Activated naive CD4-positive, alpha-beta T cell treated with anti-CD3 and anti-CD28 coated beads for 36 hours (primary cell): ENCODE measurements at regions of chr5 and their contacts with region 1.

Region 1: GRCh38 chr5:41856644-41857491 is 13.4 kb downstream of the OXCT1 start:
- DNase-seq: peak; percentile 69
- H3K4me3 Mint-ChIP-seq: no peak overlapping the region
- H3K27ac Mint-ChIP-seq: no peak overlapping the region
- H3K4me1 Mint-ChIP-seq: peaks cover 26% of the 10 kb centered on the region
- H3K27me3 Mint-ChIP-seq: no peaks in the 10 kb centered on the region

Region 2: GRCh38 chr5:41748631-41749030 is 108.2 kb before region 1 on chr5:
- CTCF ChIA-PET with region 1: no interaction called
- intact Hi-C with region 1: no loop called
- DNase-seq: peak; percentile 63
- H3K4me3 Mint-ChIP-seq: no peak overlapping the region
- H3K27ac Mint-ChIP-seq: no peak overlapping the region
- H3K4me1 Mint-ChIP-seq: peaks cover 34% of the 10 kb centered on the region
- H3K27me3 Mint-ChIP-seq: no peaks in the 10 kb centered on the region

Region 3: DNA sequence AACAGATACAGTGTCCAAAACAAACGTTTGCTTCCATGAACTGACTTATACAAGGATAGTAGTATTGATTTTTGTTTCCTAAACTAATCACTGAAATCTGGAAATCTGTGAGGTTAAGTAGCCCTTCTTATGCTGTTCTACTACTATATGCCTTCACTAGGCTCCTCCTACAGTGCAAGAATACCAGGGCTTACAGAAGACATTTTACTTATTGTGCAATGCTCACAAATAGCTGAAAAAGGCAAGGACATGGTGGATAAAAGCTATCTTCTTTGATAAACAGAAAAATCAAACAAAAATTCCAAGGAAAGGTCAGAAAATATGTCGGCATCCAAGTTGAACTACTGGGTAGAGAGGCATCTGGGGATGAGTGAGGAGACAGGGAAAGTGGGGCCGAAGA is 48.6 kb before region 1 on chr5:
- CTCF ChIA-PET with region 1: no interaction called
- intact Hi-C with region 1: no loop called
- DNase-seq: no peak
- H3K4me3 Mint-ChIP-seq: no peak overlapping the region
- H3K27ac Mint-ChIP-seq: no peak overlapping the region
- H3K4me1 Mint-ChIP-seq: peaks cover 25% of the 10 kb centered on the region
- H3K27me3 Mint-ChIP-seq: no peaks in the 10 kb centered on the region

Region 4: DNA sequence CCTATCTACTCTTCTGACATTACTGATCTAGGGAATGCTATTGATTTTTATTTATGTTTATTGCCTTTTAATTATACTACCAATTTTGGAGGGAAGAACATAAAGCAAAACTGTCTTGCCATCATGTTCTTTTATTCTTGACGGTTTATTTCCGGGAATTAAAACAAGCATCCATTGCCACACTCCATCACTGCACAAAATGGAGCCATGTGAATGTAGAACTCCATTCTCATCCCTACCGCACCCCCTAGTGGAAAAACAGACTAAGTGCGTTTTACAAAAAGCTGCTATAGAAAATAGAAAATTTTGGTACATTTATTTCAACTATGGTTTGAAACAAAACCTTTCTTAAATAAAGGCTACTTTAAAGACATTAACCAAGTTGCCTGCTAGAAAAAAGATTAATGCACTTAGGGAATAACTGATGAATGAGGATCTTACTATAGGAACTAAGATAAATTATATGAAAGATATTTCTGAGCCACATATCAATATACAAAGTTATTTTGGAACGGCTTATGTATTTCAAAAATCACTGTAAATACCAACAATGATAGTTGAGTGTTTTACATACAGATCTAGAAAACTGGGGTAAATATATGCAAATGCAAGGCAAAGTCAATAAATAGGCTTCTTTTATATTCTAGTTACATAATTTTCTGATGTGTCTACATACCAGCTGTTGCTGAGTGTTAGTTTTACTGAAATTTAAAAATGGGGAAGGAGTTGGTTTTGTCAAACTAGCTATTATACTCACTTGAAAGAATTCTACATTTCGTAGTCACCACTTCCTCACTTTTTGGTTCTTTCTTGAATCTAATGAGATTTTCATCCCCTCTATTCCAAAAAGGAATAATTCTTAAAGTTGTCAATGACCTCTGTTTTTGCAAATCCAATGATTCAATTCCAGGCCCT is 13.2 kb before region 1 on chr5:
- CTCF ChIA-PET with region 1: interaction called, 27 read pairs
- intact Hi-C with region 1: no loop called
- DNase-seq: peak; percentile 36
- H3K4me3 Mint-ChIP-seq: no peak overlapping the region
- H3K27ac Mint-ChIP-seq: no peak overlapping the region
- H3K4me1 Mint-ChIP-seq: peaks cover 13% of the 10 kb centered on the region
- H3K27me3 Mint-ChIP-seq: no peaks in the 10 kb centered on the region

Region 5: DNA sequence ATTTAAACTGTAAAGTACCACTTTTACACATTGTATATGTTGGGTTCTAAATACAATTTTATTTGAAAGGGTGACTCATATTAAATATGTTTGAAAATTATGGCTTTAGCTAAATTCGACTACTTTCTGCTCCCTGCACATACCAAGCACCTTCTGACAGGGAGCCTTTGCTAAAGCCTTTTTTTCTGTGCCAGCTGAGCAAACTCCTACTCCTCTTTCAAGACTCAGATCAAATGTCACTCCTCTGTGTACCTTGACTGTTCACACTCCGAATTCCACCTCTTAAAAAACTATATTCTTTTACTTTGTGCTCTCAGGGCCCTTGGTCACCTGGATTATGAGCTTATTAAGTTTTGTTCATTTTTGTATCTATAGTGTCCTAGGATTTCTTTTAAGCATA is 19.8 kb after region 1 on chr5:
- CTCF ChIA-PET with region 1: interaction called, 11 read pairs
- intact Hi-C with region 1: no loop called
- DNase-seq: no peak
- H3K4me3 Mint-ChIP-seq: no peak overlapping the region
- H3K27ac Mint-ChIP-seq: no peak overlapping the region
- H3K4me1 Mint-ChIP-seq: peaks cover 17% of the 10 kb centered on the region
- H3K27me3 Mint-ChIP-seq: peaks cover 8% of the 10 kb centered on the region

Region 6: GRCh38 chr5:41924872-41925554 is 68.1 kb after region 1 on chr5 and contains the start of gene FBXO4:
- CTCF ChIA-PET with region 1: interaction called, 4 read pairs
- intact Hi-C with region 1: loop called (anchors 1 kb)
- DNase-seq: peak; percentile 89
- H3K4me3 Mint-ChIP-seq: peak within 1 kb of the TSS; percentile 85
- H3K27ac Mint-ChIP-seq: peak within 1 kb of the TSS; percentile 94
- H3K4me1 Mint-ChIP-seq: peaks cover 18% of the 10 kb centered on the region
- H3K27me3 Mint-ChIP-seq: no peaks in the 10 kb centered on the region
- total RNA-seq, gene FBXO4: 16.1 to 19.1 TPM

Region 7: DNA sequence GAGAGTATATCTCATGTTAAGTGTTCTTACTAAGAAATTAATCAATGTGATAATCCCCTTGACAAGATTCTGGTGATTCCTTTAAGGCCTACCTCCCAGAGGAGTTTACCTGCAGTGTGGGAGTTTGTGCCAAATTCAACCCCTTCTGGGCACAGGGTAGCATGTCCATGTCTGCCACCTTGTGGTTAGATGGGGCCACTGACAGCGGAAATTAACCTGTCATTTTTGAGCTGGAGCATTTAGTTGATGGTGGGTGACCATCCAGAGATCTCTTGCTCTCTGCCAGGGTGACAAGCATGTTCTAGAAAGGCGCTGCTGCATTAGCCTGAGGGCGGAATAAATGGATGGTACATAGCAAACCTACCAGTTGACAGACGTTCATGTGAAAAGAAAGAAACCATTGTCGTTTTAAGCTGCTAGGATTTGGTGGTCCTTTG is 200.4 kb after region 1 on chr5:
- CTCF ChIA-PET with region 1: interaction called, 68 read pairs
- intact Hi-C with region 1: loop called (anchors 1 kb)
- DNase-seq: peak; percentile 69
- H3K4me3 Mint-ChIP-seq: no peak overlapping the region
- H3K27ac Mint-ChIP-seq: no peak overlapping the region
- H3K4me1 Mint-ChIP-seq: no peaks in the 10 kb centered on the region
- H3K27me3 Mint-ChIP-seq: no peaks in the 10 kb centered on the region

Region 8: DNA sequence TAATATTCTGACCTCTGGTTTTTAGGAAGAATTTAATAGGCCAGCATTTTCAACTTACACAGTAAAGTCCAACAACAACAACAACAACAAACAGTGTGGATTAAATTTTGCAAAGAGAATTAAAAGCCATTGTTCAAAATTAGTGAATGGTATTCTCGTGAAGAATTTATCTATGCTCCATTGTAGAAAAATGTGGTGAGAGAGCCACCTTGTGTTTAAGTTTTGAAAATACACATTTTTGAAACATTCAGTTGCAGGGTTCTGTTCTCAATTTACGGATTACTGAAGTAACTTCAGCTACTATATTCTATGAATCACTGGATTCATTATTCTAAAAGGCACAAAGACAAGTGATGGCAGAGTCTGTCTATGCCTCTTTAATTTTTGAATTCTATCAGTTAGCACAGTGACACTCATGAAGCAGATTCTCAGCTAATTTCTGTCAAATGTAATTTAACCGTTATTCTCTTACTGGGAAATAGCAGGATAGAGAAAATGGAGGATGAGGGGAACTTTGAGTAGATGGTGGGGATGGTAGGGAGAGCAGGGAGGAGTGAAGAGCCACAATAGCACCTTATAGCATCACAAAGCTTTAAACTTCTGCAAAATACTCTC is 910.7 kb after region 1 on chr5:
- CTCF ChIA-PET with region 1: no interaction called
- intact Hi-C with region 1: loop called (anchors 5 kb)
- DNase-seq: no peak
- H3K4me3 Mint-ChIP-seq: no peak overlapping the region
- H3K27ac Mint-ChIP-seq: no peak overlapping the region
- H3K4me1 Mint-ChIP-seq: no peaks in the 10 kb centered on the region
- H3K27me3 Mint-ChIP-seq: peaks cover 7% of the 10 kb centered on the region